Activated B cell treated with CpG ODN at 0.5 μM for 24 hours (primary cell): ENCODE measurements at regions of chr1 and their contacts with region 1.

Region 1: DNA sequence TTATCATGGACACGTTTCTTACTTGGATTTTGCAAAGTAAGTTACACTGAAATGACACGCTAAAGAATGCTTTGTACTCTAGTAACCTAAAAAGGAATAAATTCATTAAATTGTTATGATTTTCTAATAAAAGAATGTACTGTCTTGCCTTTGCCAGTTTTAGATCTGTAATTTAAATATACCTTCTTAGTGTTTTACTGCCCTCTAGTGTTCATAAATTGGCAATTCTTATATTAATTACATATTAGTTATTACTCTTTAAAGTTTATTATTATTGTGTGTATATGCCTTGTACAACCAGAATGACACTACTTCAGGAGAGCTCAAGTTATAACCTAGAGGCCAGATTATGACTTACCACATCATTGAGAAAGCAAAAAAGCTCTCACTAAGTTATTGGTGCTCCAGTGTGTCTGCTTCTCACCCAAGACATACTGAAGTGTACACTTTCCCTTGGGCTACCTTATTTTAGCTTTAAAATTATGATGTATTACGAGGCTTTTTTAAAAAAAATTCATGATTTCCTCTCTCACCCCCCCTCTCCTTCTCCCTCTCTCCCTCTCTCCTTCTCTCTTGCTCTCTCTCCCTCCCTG is 169.9 kb downstream of the HS2ST1 start:
- DNase-seq: no peak
- ATAC-seq: peak; percentile 28
- H3K4me3 Mint-ChIP-seq: no peak overlapping the region
- H3K27ac Mint-ChIP-seq: no peak overlapping the region
- H3K4me1 Mint-ChIP-seq: peaks cover 12% of the 10 kb centered on the region
- H3K27me3 Mint-ChIP-seq: no peaks in the 10 kb centered on the region
- CTCF ChIP-seq: peak; percentile 42

Region 2: GRCh38 chr1:86470859-86471258 is 613.5 kb before region 1 on chr1:
- CTCF ChIA-PET with region 1: no interaction called
- POLR2A ChIA-PET with region 1: no interaction called
- intact Hi-C with region 1: loop called (anchors 10 kb)
- DNase-seq: no peak
- ATAC-seq: peak; percentile 56
- H3K4me3 Mint-ChIP-seq: no peak overlapping the region
- H3K27ac Mint-ChIP-seq: peak overlapping the region; percentile 6
- H3K4me1 Mint-ChIP-seq: peaks cover 6% of the 10 kb centered on the region
- H3K27me3 Mint-ChIP-seq: peaks cover 18% of the 10 kb centered on the region
- CTCF ChIP-seq: no peak

Region 3: GRCh38 chr1:86741947-86742572 is 342.3 kb before region 1 on chr1:
- CTCF ChIA-PET with region 1: interaction called, 3 read pairs
- POLR2A ChIA-PET with region 1: no interaction called
- intact Hi-C with region 1: loop called (anchors 1 kb)
- DNase-seq: no peak
- ATAC-seq: no peak
- H3K4me3 Mint-ChIP-seq: no peak overlapping the region
- H3K27ac Mint-ChIP-seq: no peak overlapping the region
- H3K4me1 Mint-ChIP-seq: peaks cover 2% of the 10 kb centered on the region
- H3K27me3 Mint-ChIP-seq: no peaks in the 10 kb centered on the region
- CTCF ChIP-seq: peak; percentile 73

Region 4: DNA sequence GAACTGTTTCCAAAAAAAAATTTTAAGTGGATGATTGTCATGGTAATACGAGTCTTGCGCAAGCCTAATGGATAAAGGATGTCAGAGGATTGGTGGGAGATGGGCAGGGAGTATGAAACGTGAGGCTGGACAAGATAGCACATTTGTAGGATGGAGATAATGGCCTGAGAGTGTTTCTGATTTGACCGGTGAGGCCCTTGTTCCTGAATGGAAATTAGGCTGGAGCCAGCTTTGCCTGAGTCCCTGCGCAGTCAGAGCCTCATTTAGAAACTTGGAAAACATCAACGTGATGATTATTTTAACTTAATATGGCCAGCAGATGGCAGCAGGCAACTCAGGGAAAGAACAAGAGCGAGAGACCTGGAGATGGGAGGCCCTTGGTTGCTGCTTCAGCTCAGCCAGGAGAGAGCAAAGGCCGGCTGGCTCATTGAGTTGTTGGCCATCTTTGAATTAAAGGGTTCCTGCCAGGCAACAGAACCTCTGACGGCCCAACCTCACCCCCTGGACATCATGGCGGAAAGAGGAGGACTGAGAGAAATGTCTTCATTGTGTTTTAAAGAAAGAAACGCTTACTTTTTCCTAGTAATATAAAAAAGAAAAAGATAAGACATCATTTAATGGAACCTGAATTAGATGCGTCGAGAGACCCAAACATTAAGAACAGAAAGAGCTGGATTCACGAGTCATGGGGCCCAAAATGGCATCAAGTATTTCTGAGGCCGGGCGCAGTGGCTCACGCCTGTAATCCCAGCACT is 250.7 kb before region 1 on chr1:
- CTCF ChIA-PET with region 1: interaction called, 185 read pairs
- POLR2A ChIA-PET with region 1: no interaction called
- intact Hi-C with region 1: loop called (anchors 1 kb)
- DNase-seq: peak; percentile 22
- ATAC-seq: peak; percentile 88
- H3K4me3 Mint-ChIP-seq: no peak overlapping the region
- H3K27ac Mint-ChIP-seq: peak overlapping the region; percentile 67
- H3K4me1 Mint-ChIP-seq: peaks cover 4% of the 10 kb centered on the region
- H3K27me3 Mint-ChIP-seq: no peaks in the 10 kb centered on the region
- CTCF ChIP-seq: no peak

Region 5: DNA sequence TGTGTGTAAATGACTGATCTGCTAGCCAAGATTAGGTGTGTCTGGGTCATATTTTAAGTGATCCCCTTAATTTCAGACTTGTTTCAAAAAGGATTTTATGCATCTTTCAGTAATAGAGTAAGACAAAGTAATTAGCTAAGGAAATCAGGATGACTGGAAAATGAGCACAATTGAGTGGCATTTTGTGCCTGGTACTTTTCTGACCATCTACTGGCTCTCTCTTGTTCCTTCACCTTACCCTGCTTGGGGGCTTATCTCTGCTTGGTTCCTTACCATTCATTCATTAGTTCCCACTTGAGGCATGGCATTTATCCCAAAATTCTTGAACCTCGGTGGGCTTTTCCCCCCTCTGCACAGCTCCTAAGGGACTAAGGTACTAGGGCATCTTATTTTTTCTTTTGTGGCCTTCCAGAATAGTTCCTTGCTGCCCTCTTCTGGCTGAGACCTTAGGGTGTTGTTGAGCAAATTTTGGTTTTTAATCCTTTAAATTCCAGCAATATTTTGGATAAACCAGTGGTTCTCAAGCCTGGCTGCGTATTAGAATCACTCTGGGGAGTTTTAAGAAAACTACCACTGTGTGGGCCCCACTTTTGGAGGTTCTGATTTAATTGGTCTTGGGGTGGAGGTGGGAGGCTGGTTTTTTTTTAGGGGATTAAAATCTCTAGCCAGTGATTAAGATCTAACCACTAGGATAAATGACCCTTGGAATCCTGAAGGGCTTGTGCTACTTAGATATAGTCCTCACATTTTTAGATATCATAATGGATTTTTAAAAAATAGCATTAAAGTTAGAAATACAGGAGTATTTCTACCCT is 119.1 kb before region 1 on chr1:
- CTCF ChIA-PET with region 1: interaction called, 36 read pairs
- POLR2A ChIA-PET with region 1: no interaction called
- intact Hi-C with region 1: loop called (anchors 1 kb)
- DNase-seq: no peak
- ATAC-seq: peak; percentile 34
- H3K4me3 Mint-ChIP-seq: no peak overlapping the region
- H3K27ac Mint-ChIP-seq: peak overlapping the region; percentile 14
- H3K4me1 Mint-ChIP-seq: peaks cover 12% of the 10 kb centered on the region
- H3K27me3 Mint-ChIP-seq: no peaks in the 10 kb centered on the region
- CTCF ChIP-seq: no peak

Region 6: GRCh38 chr1:86987446-86987845 is 96.9 kb before region 1 on chr1:
- CTCF ChIA-PET with region 1: interaction called, 7 read pairs
- POLR2A ChIA-PET with region 1: no interaction called
- intact Hi-C with region 1: loop called (anchors 5 kb)
- DNase-seq: no peak
- ATAC-seq: no peak
- H3K4me3 Mint-ChIP-seq: no peak overlapping the region
- H3K27ac Mint-ChIP-seq: no peak overlapping the region
- H3K4me1 Mint-ChIP-seq: no peaks in the 10 kb centered on the region
- H3K27me3 Mint-ChIP-seq: no peaks in the 10 kb centered on the region
- CTCF ChIP-seq: no peak

Region 7: DNA sequence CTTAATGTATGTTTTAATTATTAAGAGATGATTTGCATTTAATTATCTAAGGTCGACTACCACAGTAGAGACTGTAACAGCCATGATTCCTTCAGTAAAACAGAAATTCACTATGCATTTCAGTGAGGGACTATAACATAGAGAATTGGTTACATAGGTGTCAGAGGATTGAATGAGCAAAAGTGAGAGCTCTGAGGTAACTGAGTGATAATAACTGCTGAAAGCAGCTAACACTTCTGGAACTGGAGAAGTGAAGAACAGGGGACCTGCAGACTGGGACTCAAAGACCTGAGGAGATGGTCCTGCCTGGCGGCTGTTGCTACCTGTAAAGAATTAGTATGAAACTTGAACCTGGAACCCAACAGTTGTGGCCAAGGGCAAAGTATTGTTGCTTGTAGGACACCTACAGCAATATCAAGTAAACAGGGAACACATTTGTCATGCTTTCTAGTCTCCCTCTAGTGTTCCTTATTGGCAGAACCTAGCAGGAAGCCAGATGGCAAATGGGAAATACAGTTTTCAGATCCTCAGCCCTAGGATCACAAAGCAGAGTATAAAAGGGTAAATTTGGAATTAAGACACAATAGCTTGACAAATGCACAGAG is 59.3 kb before region 1 on chr1:
- CTCF ChIA-PET with region 1: no interaction called
- POLR2A ChIA-PET with region 1: no interaction called
- intact Hi-C with region 1: loop called (anchors 1 kb)
- DNase-seq: no peak
- ATAC-seq: peak; percentile 21
- H3K4me3 Mint-ChIP-seq: no peak overlapping the region
- H3K27ac Mint-ChIP-seq: no peak overlapping the region
- H3K4me1 Mint-ChIP-seq: peaks cover 21% of the 10 kb centered on the region
- H3K27me3 Mint-ChIP-seq: no peaks in the 10 kb centered on the region
- CTCF ChIP-seq: no peak